Mammary epithelial cell (primary cell): ENCODE measurements at regions of chr7 and their contacts with region 1.

Region 1: DNA sequence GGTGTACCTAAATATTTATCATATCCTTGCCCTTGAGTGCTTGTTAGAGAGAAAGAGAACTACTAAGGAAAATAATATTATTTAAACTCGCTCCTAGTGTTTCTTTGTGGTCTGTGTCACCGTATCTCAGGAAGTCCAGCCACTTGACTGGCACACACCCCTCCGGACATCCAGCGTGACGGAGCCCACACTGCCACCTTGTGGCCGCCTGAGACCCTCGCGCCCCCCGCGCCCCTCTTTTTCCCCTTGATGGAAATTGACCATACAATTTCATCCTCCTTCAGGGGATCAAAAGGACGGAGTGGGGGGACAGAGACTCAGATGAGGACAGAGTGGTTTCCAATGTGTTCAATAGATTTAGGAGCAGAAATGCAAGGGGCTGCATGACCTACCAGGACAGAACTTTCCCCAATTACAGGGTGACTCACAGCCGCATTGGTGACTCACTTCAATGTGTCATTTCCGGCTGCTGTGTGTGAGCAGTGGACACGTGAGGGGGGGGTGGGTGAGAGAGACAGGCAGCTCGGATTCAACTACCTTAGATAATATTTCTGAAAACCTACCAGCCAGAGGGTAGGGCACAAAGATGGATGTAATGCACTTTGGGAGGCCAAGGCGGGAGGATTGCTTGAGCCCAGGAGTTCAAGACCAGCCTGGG is 11.4 kb downstream of the SERPINE1 start:
- DNase-seq: peak; percentile 96
- H3K4me3 ChIP-seq: no peak overlapping the region
- H3K27ac ChIP-seq: peak overlapping the region; percentile 55
- H3K4me1 ChIP-seq: peaks cover 52% of the 10 kb centered on the region
- H3K27me3 ChIP-seq: no peaks in the 10 kb centered on the region
- CTCF ChIP-seq: peak; percentile 34 to 59

Region 2: GRCh38 chr7:100965723-100966541 is 172.4 kb before region 1 on chr7:
- CTCF ChIA-PET with region 1: interaction called, 7 read pairs
- dilution Hi-C with region 1: no loop called
- in situ Hi-C with region 1: no loop called
- intact Hi-C with region 1: loop called (anchors 5 kb)
- DNase-seq: peak; percentile 74
- H3K4me3 ChIP-seq: peak overlapping the region in 2 of 3 experiments; percentile 23 to 34
- H3K27ac ChIP-seq: no peak overlapping the region
- H3K4me1 ChIP-seq: peaks cover 7% of the 10 kb centered on the region
- H3K27me3 ChIP-seq: peaks cover 17% of the 10 kb centered on the region
- CTCF ChIP-seq: peak; percentile 82 to 86

Region 3: GRCh38 chr7:101017064-101017777 is 121.1 kb before region 1 on chr7:
- CTCF ChIA-PET with region 1: no interaction called
- dilution Hi-C with region 1: no loop called
- in situ Hi-C with region 1: no loop called
- intact Hi-C with region 1: no loop called
- DNase-seq: peak; percentile 78
- H3K4me3 ChIP-seq: peak overlapping the region; percentile 8 to 45 (median 25)
- H3K27ac ChIP-seq: peak overlapping the region; percentile 50
- H3K4me1 ChIP-seq: peaks cover 18% of the 10 kb centered on the region
- H3K27me3 ChIP-seq: no peaks in the 10 kb centered on the region
- CTCF ChIP-seq: no peak

Region 4: GRCh38 chr7:101066141-101066832 is 72.1 kb before region 1 on chr7:
- CTCF ChIA-PET with region 1: no interaction called
- dilution Hi-C with region 1: no loop called
- in situ Hi-C with region 1: no loop called
- intact Hi-C with region 1: no loop called
- DNase-seq: peak; percentile 75
- H3K4me3 ChIP-seq: no peak overlapping the region
- H3K27ac ChIP-seq: no peak overlapping the region
- H3K4me1 ChIP-seq: peaks cover 4% of the 10 kb centered on the region
- H3K27me3 ChIP-seq: peaks cover 3% of the 10 kb centered on the region
- CTCF ChIP-seq: no peak

Region 5: GRCh38 chr7:101085162-101085987 is 53.0 kb before region 1 on chr7 and contains the start of gene TRIM56:
- CTCF ChIA-PET with region 1: no interaction called
- dilution Hi-C with region 1: no loop called
- in situ Hi-C with region 1: no loop called
- intact Hi-C with region 1: loop called (anchors 2 kb)
- DNase-seq: peak; percentile 100
- H3K4me3 ChIP-seq: peak within 1 kb of the TSS; percentile 60 to 87 (median 66)
- H3K27ac ChIP-seq: peak within 1 kb of the TSS; percentile 91
- H3K4me1 ChIP-seq: peaks cover 22% of the 10 kb centered on the region
- H3K27me3 ChIP-seq: no peaks in the 10 kb centered on the region
- CTCF ChIP-seq: no peak
- total RNA-seq, gene TRIM56: 16.3 to 30.8 TPM

Region 6: GRCh38 chr7:101099969-101100781 is 38.2 kb before region 1 on chr7:
- CTCF ChIA-PET with region 1: no interaction called
- dilution Hi-C with region 1: no loop called
- in situ Hi-C with region 1: loop called in 1 of 2 experiments (anchors 5 kb)
- intact Hi-C with region 1: loop called (anchors 1 kb)
- DNase-seq: peak; percentile 98
- H3K4me3 ChIP-seq: no peak overlapping the region
- H3K27ac ChIP-seq: peak overlapping the region; percentile 75
- H3K4me1 ChIP-seq: peaks cover 30% of the 10 kb centered on the region
- H3K27me3 ChIP-seq: no peaks in the 10 kb centered on the region
- CTCF ChIP-seq: no peak

Region 7: DNA sequence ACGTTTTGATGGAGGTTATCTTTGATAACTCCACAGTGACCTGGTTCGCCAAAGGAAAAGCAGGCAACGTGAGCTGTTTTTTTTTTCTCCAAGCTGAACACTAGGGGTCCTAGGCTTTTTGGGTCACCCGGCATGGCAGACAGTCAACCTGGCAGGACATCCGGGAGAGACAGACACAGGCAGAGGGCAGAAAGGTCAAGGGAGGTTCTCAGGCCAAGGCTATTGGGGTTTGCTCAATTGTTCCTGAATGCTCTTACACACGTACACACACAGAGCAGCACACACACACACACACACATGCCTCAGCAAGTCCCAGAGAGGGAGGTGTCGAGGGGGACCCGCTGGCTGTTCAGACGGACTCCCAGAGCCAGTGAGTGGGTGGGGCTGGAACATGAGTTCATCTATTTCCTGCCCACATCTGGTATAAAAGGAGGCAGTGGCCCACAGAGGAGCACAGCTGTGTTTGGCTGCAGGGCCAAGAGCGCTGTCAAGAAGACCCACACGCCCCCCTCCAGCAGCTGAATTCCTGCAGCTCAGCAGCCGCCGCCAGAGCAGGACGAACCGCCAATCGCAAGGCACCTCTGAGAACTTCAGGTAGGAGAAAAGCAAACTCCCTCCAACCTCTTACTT is 11.6 kb before region 1 on chr7 and contains the start of gene SERPINE1:
- CTCF ChIA-PET with region 1: no interaction called
- dilution Hi-C with region 1: no loop called
- in situ Hi-C with region 1: no loop called
- intact Hi-C with region 1: loop called (anchors 1 kb)
- DNase-seq: peak; percentile 99
- H3K4me3 ChIP-seq: peak within 1 kb of the TSS; percentile 60 to 76 (median 66)
- H3K27ac ChIP-seq: peak within 1 kb of the TSS; percentile 85
- H3K4me1 ChIP-seq: peaks cover 47% of the 10 kb centered on the region
- H3K27me3 ChIP-seq: no peaks in the 10 kb centered on the region
- CTCF ChIP-seq: peak in 1 of 2 donors; percentile 22
- total RNA-seq, gene SERPINE1: 429 to 467 TPM

Region 8: DNA sequence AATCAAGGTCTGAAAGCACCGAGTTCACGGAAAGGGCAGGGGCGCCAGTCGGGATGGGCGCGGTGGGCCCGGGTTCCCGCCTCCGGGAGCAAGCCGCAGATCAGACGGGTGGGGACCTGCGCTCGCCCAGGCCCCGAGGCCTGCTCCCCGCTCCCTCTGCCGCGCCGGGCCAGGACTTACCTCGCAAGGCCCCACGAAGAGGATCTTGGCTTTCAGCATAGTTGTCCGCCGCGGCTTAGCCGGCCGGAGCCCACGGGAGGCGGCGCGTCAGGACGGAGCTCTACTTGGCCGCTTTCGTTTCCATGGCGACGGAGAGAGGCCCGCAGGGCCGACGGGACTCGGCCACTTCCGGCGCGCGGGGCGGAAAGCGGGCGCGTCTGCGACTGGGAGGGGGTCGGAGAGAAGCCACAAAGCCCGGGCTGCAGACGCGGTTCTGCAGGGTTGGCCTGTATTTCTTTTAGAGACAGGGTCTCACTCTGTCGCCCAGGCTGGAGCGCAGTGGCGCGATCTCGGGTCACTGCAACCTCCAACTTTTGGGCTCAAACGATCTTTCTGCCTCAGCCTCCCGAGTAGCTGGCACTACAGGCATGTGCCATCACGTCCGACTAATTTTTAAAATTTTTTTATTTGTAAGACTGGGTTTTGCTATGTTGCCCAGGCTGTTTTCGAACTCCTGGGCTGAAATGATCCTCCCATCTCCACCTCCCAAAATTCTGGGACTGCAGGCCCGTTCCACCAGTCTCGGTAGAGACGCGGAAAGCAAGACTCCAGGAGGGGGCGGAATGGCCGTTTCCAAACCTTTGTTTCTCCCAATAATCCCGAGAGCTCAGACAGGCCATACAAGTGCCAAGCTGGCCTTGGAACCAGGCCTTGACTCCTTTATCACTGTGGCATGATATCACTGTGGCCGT is 183.4 kb after region 1 on chr7 and contains the start of gene IFT22:
- CTCF ChIA-PET with region 1: no interaction called
- dilution Hi-C with region 1: no loop called
- in situ Hi-C with region 1: no loop called
- intact Hi-C with region 1: no loop called
- DNase-seq: peak; percentile 81
- H3K4me3 ChIP-seq: peak within 1 kb of the TSS; percentile 78 to 90 (median 84)
- H3K27ac ChIP-seq: peak within 1 kb of the TSS; percentile 79
- H3K4me1 ChIP-seq: no peaks in the 10 kb centered on the region
- H3K27me3 ChIP-seq: no peaks in the 10 kb centered on the region
- CTCF ChIP-seq: peak; percentile 2 to 47
- total RNA-seq, gene IFT22: 24.7 to 32.2 TPM